ENCODE measurements at regions of chr5 and their contacts with region 1.

Region 1: DNA sequence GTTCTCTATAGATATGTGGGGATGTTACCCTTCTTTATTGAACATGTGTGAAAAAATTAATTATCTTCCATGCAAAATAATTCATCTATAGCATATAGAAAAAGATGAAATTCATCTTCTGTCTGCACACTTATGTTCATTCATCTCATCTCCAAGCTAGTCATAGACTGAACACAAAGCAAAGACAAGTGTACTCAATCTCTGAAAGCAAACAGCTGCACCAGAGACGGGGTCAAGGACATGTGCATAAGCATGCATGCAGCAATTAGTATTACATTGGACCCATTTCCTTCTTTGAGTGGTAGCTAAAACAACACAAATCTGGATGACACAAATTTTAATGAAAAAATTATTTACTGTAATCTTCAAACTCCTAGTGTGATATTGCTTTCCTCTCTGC is 547.0 kb upstream of the COX7C start:
- DNase-seq: no peak
- ATAC-seq: no peak
- H3K4me3 ChIP-seq: no peak overlapping the region
- H3K4me3 Mint-ChIP-seq: no peak overlapping the region
- H3K27ac ChIP-seq: no peak overlapping the region
- H3K27ac Mint-ChIP-seq: no peak overlapping the region
- H3K4me1 ChIP-seq: no peaks in the 10 kb centered on the region
- H3K4me1 Mint-ChIP-seq: no peaks in the 10 kb centered on the region
- H3K27me3 ChIP-seq: no peaks in the 10 kb centered on the region
- H3K27me3 Mint-ChIP-seq: no peaks in the 10 kb centered on the region
- CTCF ChIP-seq: no peak

Region 2: DNA sequence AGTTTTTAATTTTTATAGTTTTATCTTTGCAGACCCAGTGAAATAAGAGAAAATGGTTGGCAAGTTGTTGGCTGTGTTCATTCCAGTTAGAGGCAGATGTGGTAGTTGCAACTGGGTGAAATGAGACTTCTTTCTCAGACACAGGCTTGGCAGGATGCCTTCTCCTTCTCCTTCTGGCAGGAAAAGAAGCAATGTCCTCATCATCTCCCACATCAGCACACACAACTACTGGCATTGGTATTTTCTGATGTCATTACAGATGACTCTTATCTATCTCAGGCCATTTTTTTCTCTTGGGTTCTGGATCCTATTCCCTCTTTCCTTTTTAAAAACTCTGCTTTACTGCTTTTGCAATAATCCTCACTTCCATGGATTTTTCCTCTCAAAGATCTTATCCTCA is 1582.8 kb before region 1 on chr5:
- CTCF ChIA-PET with region 1: no interaction called
- POLR2A ChIA-PET with region 1: no interaction called
- intact Hi-C with region 1: no loop called
- DNase-seq: no peak
- ATAC-seq: no peak
- H3K4me3 ChIP-seq: no peak overlapping the region
- H3K4me3 Mint-ChIP-seq: no peak overlapping the region
- H3K27ac ChIP-seq: no peak overlapping the region
- H3K27ac Mint-ChIP-seq: no peak overlapping the region
- H3K4me1 ChIP-seq: no peaks in the 10 kb centered on the region
- H3K4me1 Mint-ChIP-seq: no peaks in the 10 kb centered on the region
- H3K27me3 ChIP-seq: no peaks in the 10 kb centered on the region
- H3K27me3 Mint-ChIP-seq: no peaks in the 10 kb centered on the region
- CTCF ChIP-seq: no peak

Region 3: DNA sequence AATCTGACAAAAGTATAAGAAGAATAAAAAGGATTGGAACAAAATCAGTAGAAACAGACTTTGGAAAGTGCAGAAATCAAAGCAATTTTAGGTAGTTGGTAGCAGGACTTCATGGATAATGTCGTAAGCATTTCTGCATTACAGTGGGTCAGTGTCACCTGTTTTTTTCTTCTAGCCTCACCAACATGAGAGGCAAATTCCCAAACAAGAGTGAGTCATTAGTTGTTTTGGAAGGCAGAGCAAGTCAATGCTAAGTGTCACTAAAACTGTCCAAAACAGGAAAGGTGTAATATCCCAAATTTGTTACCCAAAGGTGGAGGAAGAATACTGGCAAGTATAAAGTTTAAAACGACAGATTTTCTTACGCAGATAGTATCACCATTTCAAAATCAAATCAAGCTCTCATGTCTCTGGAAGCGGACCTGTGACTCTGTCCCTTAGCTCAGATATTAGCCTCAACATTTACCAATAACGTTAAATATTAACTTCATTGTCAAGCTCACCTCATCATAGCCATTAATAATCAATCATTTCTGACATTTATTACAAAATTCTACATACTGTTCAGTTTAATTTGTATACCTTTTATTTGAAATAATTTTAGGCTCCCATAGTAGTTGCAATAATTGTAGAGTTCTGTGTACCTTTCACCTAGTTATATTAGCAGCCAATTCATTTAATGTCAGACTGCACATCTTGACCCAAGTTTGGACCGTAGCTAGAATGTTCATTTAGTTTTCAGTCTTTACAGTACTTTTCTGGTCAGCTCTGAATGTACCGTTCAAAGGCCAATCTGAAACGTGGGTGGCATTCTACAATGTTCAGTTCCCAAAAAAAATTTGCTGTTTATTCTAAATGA is 354.1 kb before region 1 on chr5:
- CTCF ChIA-PET with region 1: no interaction called
- POLR2A ChIA-PET with region 1: no interaction called
- intact Hi-C with region 1: no loop called
- DNase-seq: no peak
- ATAC-seq: no peak
- H3K4me3 ChIP-seq: no peak overlapping the region
- H3K4me3 Mint-ChIP-seq: no peak overlapping the region
- H3K27ac ChIP-seq: no peak overlapping the region
- H3K27ac Mint-ChIP-seq: no peak overlapping the region
- H3K4me1 ChIP-seq: no peaks in the 10 kb centered on the region
- H3K4me1 Mint-ChIP-seq: no peaks in the 10 kb centered on the region
- H3K27me3 ChIP-seq: no peaks in the 10 kb centered on the region
- H3K27me3 Mint-ChIP-seq: no peaks in the 10 kb centered on the region
- CTCF ChIP-seq: no peak

Region 4: DNA sequence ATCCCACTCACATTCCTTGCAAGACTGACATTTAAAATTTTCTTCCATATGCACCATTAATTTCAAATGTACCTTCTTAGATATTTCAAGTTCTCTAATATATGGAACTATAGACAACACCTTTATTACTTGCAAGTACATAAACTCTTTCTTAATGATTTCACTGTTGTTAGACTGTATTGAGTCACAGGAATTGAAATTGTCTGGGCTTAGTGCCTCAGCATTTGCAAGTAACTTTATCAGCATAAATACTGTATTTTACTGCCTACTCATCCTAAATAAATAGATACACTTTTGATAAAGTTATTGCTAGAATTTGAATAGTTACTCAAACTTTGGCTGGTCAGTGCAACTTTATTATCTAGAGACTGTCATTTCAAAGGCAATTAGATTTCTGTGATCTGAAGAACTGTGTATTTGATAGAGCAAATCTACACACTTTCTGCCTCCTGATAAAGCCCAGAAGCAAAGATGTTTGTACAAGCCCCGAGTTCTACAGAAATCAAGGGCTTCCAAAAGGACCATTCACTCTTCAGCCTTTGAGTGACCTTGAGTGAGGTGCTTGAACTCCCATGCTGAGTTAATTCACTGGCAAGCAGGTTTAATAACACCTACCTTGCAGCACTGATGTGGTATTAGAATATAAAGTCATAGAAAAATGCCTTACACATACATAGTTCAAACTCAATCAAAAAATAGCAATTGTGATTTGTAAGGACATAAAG is 638.6 kb after region 1 on chr5:
- CTCF ChIA-PET with region 1: no interaction called
- POLR2A ChIA-PET with region 1: no interaction called
- intact Hi-C with region 1: loop called in 1 of 2 experiments (anchors 10 kb)
- DNase-seq: no peak
- ATAC-seq: no peak
- H3K4me3 ChIP-seq: no peak overlapping the region
- H3K4me3 Mint-ChIP-seq: no peak overlapping the region
- H3K27ac ChIP-seq: no peak overlapping the region
- H3K27ac Mint-ChIP-seq: no peak overlapping the region
- H3K4me1 ChIP-seq: no peaks in the 10 kb centered on the region
- H3K4me1 Mint-ChIP-seq: no peaks in the 10 kb centered on the region
- H3K27me3 ChIP-seq: no peaks in the 10 kb centered on the region
- H3K27me3 Mint-ChIP-seq: peaks cover 5% of the 10 kb centered on the region
- CTCF ChIP-seq: no peak

Measured in CD8-positive, alpha-beta T cell (primary cell).